ENCODE measurements at regions of chr6 and their contacts with region 1.

Region 1: GRCh38 chr6:78598966-78599365 is 268.4 kb upstream of the IRAK1BP1 start:
- DNase-seq: no peak
- ATAC-seq: no peak
- H3K4me3 ChIP-seq: no peak overlapping the region
- H3K27ac ChIP-seq: no peak overlapping the region
- H3K4me1 ChIP-seq: no peaks in the 10 kb centered on the region
- H3K27me3 ChIP-seq: no peaks in the 10 kb centered on the region
- CTCF ChIP-seq: no peak
- EP300 ChIP-seq: no peak
- POLR2A ChIP-seq: no peak
- RAD21 ChIP-seq: no peak

Region 2: DNA sequence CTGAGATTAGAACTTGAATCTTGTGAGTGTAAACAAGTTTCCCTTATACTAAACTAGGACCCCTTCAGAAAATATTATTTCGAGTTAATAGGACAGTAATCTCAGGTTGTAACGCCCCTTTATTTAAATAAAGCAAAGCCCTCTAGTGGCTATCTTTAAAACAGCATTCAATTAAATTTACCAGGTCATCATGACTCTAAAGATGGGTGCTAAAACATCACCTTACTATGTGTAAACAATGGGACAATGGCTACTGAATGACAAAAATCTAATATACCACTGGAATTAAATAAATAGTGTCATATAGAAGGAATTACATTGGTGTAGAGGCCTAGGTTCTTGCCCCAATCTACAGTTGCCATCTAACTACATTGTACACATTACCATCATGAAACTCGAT is 13.0 kb after region 1 on chr6:
- CTCF ChIA-PET with region 1: interaction called, 10 read pairs
- POLR2A ChIA-PET with region 1: interaction called, 5 read pairs
- RAD21 ChIA-PET with region 1: no interaction called
- SMC1A ChIA-PET with region 1: interaction called, 5 read pairs
- in situ Hi-C with region 1: no loop called
- intact Hi-C with region 1: no loop called
- DNase-seq: no peak
- ATAC-seq: peak; percentile 71
- H3K4me3 ChIP-seq: no peak overlapping the region
- H3K27ac ChIP-seq: no peak overlapping the region
- H3K4me1 ChIP-seq: no peaks in the 10 kb centered on the region
- H3K27me3 ChIP-seq: no peaks in the 10 kb centered on the region
- CTCF ChIP-seq: peak; percentile 29 to 53 (median 42); a peak in 4 of 6 replicates
- EP300 ChIP-seq: no peak
- POLR2A ChIP-seq: no peak
- RAD21 ChIP-seq: peak; percentile 32; the same call in 1 of the 2 replicates